Common myeloid progenitor, CD34-positive (primary cell): ENCODE measurements at regions of chr6 and their contacts with region 1.

Region 1: GRCh38 chr6:31702819-31703522 is at the start of gene ABHD16A:
- DNase-seq: peak; percentile 99
- H3K4me3 ChIP-seq: peak within 1 kb of the TSS; percentile 85 to 99 (median 96)
- H3K27ac ChIP-seq: peak within 1 kb of the TSS; percentile 98 to 99
- H3K4me1 ChIP-seq: peaks cover 0 to 25% (median 15%) of the 10 kb centered on the region in 4 experiments
- H3K27me3 ChIP-seq: no peaks in the 10 kb centered on the region

Region 2: DNA sequence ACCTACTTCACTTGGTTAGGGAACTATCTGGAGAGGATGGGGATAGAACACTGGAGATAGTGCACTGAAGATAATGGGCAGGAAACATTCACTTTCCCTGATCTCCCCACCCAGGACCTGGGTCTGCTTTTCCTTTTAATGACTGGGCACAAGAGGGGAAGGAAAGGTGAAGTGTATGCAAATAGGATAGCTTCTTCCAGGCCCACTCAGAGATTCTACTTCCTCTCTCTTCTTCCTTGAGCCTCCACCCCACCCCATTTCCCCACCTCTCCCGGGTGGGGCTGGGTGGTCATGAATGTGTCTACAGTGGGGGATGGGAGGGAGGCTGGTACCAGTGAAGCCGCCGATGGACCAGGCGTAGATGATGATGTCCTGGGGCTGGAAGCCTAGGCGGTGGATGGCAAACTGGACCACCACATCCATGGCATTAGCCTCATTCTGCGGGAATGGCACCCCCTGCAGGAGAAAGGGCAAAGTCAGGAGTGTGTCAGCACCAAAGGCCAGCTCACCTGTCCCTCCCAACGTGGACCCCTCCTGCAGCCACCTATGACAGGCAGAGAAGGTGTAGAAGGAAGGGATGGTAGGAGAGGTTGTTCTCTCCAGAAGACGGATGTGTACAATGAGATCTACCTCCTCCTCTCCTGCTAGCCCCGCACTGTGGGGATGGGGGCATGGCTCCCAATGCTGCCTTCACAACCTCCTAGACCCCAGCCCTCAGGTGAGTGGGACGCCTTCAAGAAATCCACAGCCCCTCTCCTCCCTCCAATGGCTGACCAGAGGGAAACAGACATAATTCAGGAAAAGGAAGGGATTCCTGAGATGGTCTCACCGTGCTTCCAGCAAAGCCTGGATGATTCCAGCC is 13.5 kb before region 1 on chr6:
- CTCF ChIA-PET with region 1: interaction called, 51 read pairs
- POLR2A ChIA-PET with region 1: interaction called, 3 read pairs
- DNase-seq: peak in 1 of 3 donors; percentile 17
- H3K4me3 ChIP-seq: no peak overlapping the region
- H3K27ac ChIP-seq: peak overlapping the region in 1 of 2 experiments; percentile 77
- H3K4me1 ChIP-seq: no peaks in the 10 kb centered on the region
- H3K27me3 ChIP-seq: no peaks in the 10 kb centered on the region

Region 3: GRCh38 chr6:31784098-31784925 is 81.3 kb after region 1 on chr6:
- CTCF ChIA-PET with region 1: no interaction called
- POLR2A ChIA-PET with region 1: no interaction called
- DNase-seq: no peak
- H3K4me3 ChIP-seq: no peak overlapping the region
- H3K27ac ChIP-seq: no peak overlapping the region
- H3K4me1 ChIP-seq: no peaks in the 10 kb centered on the region
- H3K27me3 ChIP-seq: no peaks in the 10 kb centered on the region

Region 4: GRCh38 chr6:31952140-31952805 is 249.3 kb after region 1 on chr6:
- CTCF ChIA-PET with region 1: no interaction called
- POLR2A ChIA-PET with region 1: no interaction called
- DNase-seq: peak in 2 of 3 donors; percentile 39 to 47
- H3K4me3 ChIP-seq: no peak overlapping the region
- H3K27ac ChIP-seq: no peak overlapping the region
- H3K4me1 ChIP-seq: no peaks in the 10 kb centered on the region
- H3K27me3 ChIP-seq: no peaks in the 10 kb centered on the region